Psoas muscle (tissue), 8 donors: ENCODE measurements at regions of chr19 and their contacts with region 1.

Region 1: DNA sequence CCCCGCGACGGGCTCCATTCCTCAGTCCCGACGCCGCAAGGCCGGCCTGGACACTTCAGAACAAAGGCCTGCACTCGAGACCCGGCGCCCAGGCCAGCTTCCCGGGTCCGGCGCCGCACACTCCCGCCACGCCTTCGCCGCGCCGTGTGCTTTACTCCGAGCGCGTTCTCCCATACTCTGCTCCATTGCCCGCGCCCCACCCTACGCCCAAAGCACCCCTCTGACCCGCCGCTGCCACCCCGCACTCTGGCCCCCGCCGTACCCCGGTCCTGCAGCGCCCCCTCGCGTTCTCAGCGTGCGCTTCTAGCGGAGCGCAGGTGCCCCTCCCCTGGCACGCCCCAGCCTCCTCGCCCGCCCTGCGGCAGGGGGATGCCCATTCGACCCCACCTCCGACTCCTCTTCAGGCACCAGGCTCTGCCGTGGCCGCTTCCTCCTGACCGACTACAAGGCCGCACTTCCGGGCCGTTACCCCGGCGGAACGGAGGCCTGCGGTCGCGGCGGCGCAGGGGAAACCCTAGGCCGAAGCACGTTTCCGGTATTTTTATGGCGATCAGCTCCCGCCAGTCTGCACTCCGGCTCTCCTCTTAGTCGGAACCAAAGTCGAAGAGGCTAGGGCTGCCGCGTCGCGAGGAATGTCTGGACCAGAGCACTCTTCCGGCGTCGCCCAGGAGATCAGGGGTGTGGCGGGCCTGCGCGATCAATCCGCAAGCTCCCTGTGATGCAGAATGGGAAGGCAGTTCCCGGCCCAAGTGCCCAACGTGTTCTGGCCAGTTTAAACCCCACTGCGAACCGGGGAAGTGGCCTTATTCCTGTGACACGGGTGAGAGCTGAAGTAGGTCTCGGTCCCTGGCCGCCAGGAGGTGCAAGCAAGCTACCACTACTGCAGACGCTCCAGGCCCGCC is at the start of gene ZBTB45:
- DNase-seq: peak; percentile 90 to 96
- ATAC-seq: peak; percentile 90 to 91 (median 91)
- H3K4me3 ChIP-seq: peak within 1 kb of the TSS; percentile 98
- H3K27ac ChIP-seq: peak within 1 kb of the TSS; percentile 97
- H3K4me1 ChIP-seq: peaks cover 30% of the 10 kb centered on the region
- H3K27me3 ChIP-seq: no peaks in the 10 kb centered on the region
- CTCF ChIP-seq: peak; percentile 55
- total RNA-seq, gene ZBTB45: 7.7 to 13.0 (median 9.9) TPM

Region 2: DNA sequence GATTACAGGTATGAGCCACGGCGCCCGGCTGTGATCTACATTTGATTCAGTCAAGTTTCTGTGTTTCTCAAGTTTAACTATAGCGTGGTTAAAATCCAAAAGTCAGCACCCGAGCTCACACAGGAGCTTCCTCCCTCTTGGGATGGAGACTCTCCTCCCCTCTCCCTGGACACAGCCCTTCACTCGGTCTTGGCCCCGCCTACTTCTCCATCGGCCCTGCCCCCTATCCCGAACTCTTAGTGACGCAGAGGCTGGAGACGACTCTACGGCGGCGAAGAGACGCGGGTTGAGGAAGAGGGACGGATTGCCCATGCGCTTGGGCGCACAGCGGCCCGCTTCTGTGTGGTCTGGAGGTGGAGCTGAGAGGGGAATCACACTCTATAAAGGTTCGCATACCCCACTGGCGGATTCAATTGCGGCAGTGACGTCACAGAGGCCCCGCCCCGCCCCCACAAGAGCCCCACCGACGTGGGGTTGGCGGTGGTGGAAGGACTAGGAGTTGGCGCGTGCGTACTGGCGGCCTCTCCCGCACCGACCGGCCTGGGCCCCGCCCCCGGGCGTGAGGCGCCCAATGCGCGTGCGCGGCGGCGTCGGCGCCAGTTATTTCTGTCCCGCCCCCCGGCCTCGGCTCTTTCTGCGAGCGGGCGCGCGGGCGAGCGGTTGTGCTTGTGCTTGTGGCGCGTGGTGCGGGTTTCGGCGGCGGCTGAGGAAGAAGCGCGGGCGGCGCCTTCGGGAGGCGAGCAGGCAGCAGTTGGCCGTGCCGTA is 24.4 kb after region 1 on chr19 and contains the start of gene TRIM28:
- intact Hi-C with region 1: loop called in 1 of 2 experiments (anchors 2 kb)
- DNase-seq: peak; percentile 98 to 99
- ATAC-seq: peak; percentile 94 to 96 (median 96)
- H3K4me3 ChIP-seq: peak within 1 kb of the TSS; percentile 95
- H3K27ac ChIP-seq: peak within 1 kb of the TSS; percentile 97
- H3K4me1 ChIP-seq: peaks cover 20% of the 10 kb centered on the region
- H3K27me3 ChIP-seq: peaks cover 0 to 7% (median 0%) of the 10 kb centered on the region in 3 donors
- CTCF ChIP-seq: no peak
- total RNA-seq, gene TRIM28: 165 to 212 (median 197) TPM